ENCODE measurements at regions of chr5 and their contacts with region 1.

Region 1: GRCh38 chr5:108669462-108669861 is 78.2 kb upstream of the FER start:
- DNase-seq: no peak
- H3K4me3 ChIP-seq: no peak overlapping the region
- H3K27ac ChIP-seq: no peak overlapping the region
- H3K4me1 ChIP-seq: no peaks in the 10 kb centered on the region
- H3K27me3 ChIP-seq: no peaks in the 10 kb centered on the region
- CTCF ChIP-seq: no peak
- EP300 ChIP-seq: no peak
- POLR2A ChIP-seq: no peak

Region 2: GRCh38 chr5:110447181-110447580 is 1777.7 kb after region 1 on chr5:
- in situ Hi-C with region 1: no loop called
- intact Hi-C with region 1: loop called (anchors 5 kb)
- DNase-seq: no peak
- H3K4me3 ChIP-seq: no peak overlapping the region
- H3K27ac ChIP-seq: no peak overlapping the region
- H3K4me1 ChIP-seq: no peaks in the 10 kb centered on the region
- H3K27me3 ChIP-seq: no peaks in the 10 kb centered on the region
- CTCF ChIP-seq: no peak
- EP300 ChIP-seq: no peak
- POLR2A ChIP-seq: no peak